ENCODE measurements at regions of chr11 and their contacts with region 1.

Region 1: DNA sequence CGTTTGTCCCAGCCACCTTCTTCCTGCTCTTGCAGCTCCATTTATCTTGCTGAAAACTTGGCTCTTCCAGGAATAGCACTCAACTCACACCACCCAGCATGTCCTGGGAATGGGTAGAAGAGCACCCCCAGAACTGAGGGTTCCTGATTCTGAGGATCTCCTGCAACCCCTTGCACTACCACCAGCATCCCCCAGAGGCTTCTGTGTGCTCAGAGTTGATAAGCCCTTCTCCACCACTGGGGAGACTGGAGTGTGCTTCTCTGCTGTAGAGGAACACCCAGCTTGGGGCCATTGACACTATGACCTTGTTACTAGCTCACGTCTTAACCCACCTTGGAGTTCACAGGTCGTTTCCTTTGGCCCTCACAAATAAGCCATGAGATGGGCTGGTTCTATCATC is 121.0 kb downstream of the GRIK4 start:
- DNase-seq: no peak
- H3K4me3 ChIP-seq: no peak overlapping the region
- H3K27ac ChIP-seq: no peak overlapping the region
- H3K4me1 ChIP-seq: peaks cover 0 to 8% (median 2%) of the 10 kb centered on the region in 4 experiments; a peak in 2 of 7 replicates
- H3K27me3 ChIP-seq: peaks cover 0 to 5% (median 2%) of the 10 kb centered on the region in 4 experiments; a peak in 5 of 7 replicates
- CTCF ChIP-seq: peak; percentile 45 to 88 (median 64)
- EP300 ChIP-seq: no peak
- POLR2A ChIP-seq: no peak
- RAD21 ChIP-seq: peak; percentile 23 to 54; a peak in 2 of 4 replicates

Region 2: DNA sequence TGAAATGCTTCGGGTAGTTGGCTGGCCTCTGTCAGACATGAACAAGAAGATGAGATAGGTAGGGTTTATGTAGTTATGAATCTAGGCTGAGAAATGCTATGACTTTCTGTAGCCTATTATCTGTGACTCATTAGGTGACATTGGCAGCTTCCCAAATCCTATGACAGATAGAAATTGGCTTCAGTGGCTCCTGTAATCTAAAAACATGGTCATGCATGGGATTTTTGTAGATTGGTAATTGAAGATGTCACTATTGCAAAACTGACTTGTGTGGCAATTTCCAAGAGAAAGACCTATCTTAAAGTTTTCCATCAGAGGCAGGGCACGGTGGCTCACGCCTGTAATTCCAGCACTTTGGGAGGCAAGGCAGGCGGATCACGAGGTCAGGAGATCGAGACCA is 150.4 kb before region 1 on chr11:
- CTCF ChIA-PET with region 1: no interaction called
- POLR2A ChIA-PET with region 1: no interaction called
- DNase-seq: no peak
- H3K4me3 ChIP-seq: no peak overlapping the region
- H3K27ac ChIP-seq: no peak overlapping the region
- H3K4me1 ChIP-seq: peaks cover 0 to 2% (median 0%) of the 10 kb centered on the region in 4 experiments; a peak in 1 of 7 replicates
- H3K27me3 ChIP-seq: no peaks in the 10 kb centered on the region
- CTCF ChIP-seq: no peak
- EP300 ChIP-seq: no peak
- POLR2A ChIP-seq: no peak
- RAD21 ChIP-seq: no peak

Region 3: GRCh38 chr11:120569861-120570260 is 62.7 kb before region 1 on chr11:
- CTCF ChIA-PET with region 1: interaction called, 10 read pairs
- POLR2A ChIA-PET with region 1: no interaction called
- DNase-seq: no peak
- H3K4me3 ChIP-seq: no peak overlapping the region; a peak in 1 of 8 replicates
- H3K27ac ChIP-seq: no peak overlapping the region
- H3K4me1 ChIP-seq: peaks cover 3 to 14% (median 6%) of the 10 kb centered on the region in 4 experiments
- H3K27me3 ChIP-seq: peaks cover 0 to 15% (median 8%) of the 10 kb centered on the region in 4 experiments; a peak in 5 of 7 replicates
- CTCF ChIP-seq: peak in 2 of 3 experiments; percentile 14 to 17; a peak in 2 of 4 replicates
- EP300 ChIP-seq: no peak
- POLR2A ChIP-seq: no peak
- RAD21 ChIP-seq: peak; percentile 9 to 29; a peak in 3 of 4 replicates

Region 4: DNA sequence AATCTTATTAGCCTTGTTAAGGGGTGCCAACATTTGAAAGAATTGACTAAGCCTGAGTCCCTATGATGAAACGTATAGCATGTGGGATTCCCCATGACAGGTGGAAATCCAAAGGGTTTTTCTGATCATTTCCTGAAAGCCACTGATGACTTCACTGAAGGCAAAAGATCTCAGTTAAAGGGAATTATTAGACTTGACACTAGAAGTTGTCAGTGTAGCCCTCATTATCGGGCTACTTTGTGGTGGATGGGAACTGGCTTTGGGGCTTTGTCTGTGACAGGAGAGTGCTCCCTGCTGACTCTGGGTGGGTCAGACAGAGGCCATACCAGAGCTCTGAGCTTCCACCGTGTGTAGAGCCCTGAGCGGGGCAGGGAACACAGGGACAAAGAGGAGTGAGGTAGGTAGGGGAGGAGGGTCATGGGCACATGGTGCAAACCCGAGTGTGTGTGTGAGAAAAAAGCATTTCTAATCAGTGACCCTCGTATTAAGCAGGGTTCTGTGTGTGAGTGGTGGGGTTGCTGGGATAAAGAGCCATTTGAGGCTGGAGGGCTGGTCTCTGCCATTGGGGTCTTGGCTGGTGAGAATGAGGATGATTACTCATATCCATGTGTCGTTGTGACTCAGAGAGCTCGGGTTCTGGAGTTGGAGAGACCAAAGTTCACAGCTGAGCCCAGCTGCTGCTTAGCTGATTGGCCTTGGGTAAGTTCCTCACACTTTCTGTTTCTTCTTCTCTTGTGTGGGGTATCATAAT is 19.9 kb before region 1 on chr11:
- CTCF ChIA-PET with region 1: interaction called, 155 read pairs
- POLR2A ChIA-PET with region 1: no interaction called
- DNase-seq: no peak
- H3K4me3 ChIP-seq: no peak overlapping the region
- H3K27ac ChIP-seq: no peak overlapping the region
- H3K4me1 ChIP-seq: peaks cover 0 to 14% (median 6%) of the 10 kb centered on the region in 4 experiments; a peak in 5 of 7 replicates
- H3K27me3 ChIP-seq: peaks cover 0 to under 1% (median 0%) of the 10 kb centered on the region in 4 experiments; a peak in 1 of 7 replicates
- CTCF ChIP-seq: no peak
- EP300 ChIP-seq: no peak
- POLR2A ChIP-seq: no peak
- RAD21 ChIP-seq: no peak

Region 5: DNA sequence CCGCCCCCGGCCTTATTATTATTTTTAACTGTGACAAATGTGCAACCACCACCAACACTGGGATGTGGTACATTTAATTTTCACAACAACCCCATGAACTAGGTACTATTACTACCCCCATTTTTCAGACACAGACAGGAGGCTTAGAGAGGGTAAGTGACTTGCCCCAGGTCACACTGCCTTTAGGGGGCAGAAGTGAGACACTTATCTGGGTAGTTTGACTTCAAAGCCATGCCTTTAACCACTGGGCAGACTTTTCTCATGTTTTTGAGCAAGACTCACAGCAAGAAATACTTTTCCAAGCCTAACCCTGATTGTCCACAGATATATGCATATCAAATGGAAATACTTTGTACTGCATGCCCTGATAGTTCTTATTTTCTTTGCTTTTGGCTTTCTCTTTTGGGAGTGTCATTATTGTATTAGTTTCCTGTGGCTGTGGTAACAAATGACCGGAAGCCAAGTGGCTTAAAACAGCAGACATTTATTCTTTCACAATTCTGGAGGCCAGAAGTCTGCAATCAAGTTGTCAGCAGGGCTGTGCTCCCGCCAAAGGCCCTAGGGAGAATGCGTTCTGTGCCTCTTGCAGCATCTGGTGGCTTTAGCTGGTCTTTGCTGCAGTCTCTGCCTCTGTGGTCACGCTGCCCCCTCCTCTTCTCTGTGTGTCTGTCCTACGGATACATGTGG is 10.2 kb before region 1 on chr11:
- CTCF ChIA-PET with region 1: interaction called, 155 read pairs
- POLR2A ChIA-PET with region 1: no interaction called
- DNase-seq: no peak
- H3K4me3 ChIP-seq: no peak overlapping the region
- H3K27ac ChIP-seq: no peak overlapping the region
- H3K4me1 ChIP-seq: no peaks in the 10 kb centered on the region; a peak in 1 of 7 replicates
- H3K27me3 ChIP-seq: no peaks in the 10 kb centered on the region
- CTCF ChIP-seq: peak; percentile 30 to 75 (median 47)
- EP300 ChIP-seq: no peak
- POLR2A ChIP-seq: no peak
- RAD21 ChIP-seq: peak; percentile 47 to 61; a peak in 3 of 4 replicates

Region 6: DNA sequence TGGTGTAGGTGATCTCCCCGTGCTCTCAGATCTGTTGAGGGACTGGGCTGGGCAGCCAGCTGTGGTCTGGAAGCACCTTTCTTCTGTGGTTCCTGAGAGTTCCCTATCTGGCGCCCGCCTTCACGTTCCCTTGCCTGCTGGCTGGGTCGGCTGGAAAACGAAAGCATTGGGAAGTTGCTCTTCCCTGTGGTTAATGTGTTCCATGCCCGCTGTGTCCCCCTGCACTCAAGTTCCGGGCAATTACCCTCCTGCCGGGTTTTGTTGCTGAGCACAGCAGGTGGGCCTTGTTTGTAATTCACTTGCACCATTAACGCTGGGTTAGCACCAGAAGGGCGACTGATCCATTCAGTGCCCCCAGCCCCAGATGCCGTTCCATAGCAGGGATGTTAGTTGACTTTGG is 13.1 kb after region 1 on chr11:
- CTCF ChIA-PET with region 1: interaction called, 111 read pairs
- POLR2A ChIA-PET with region 1: interaction called, 4 read pairs
- DNase-seq: peak; percentile 86 to 90
- H3K4me3 ChIP-seq: peak overlapping the region in 2 of 4 experiments; percentile 1 to 24; a peak in 1 of 8 replicates
- H3K27ac ChIP-seq: no peak overlapping the region
- H3K4me1 ChIP-seq: peaks cover 7 to 20% (median 11%) of the 10 kb centered on the region in 4 experiments
- H3K27me3 ChIP-seq: peaks cover 52 to 92% (median 82%) of the 10 kb centered on the region in 4 experiments
- CTCF ChIP-seq: no peak
- EP300 ChIP-seq: peak in 1 of 2 experiments; percentile 94; a peak in 2 of 3 replicates
- POLR2A ChIP-seq: no peak
- RAD21 ChIP-seq: peak in 1 of 2 experiments; percentile 26; a peak in 2 of 4 replicates

Region 7: DNA sequence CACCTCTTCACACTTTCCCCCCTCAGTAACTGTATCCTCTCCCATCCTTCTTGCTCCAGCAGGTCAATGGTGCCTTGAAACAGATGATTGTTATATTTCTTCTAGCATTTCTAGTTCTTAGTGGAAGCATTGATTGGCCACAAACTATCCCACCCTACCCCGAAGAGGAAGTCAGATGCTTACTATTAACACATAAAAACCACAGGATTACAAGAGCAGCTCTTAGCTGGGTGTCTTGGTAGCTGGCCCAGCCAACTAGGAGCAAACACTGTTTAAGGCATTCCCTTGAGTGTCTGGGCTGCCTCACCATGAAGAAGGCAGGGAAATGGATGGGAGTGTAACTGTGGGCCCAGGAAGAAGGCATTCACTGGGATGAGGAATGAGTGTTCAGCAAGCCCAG is 55.6 kb after region 1 on chr11:
- CTCF ChIA-PET with region 1: interaction called, 39 read pairs
- POLR2A ChIA-PET with region 1: no interaction called
- DNase-seq: no peak
- H3K4me3 ChIP-seq: no peak overlapping the region
- H3K27ac ChIP-seq: no peak overlapping the region
- H3K4me1 ChIP-seq: no peaks in the 10 kb centered on the region
- H3K27me3 ChIP-seq: no peaks in the 10 kb centered on the region
- CTCF ChIP-seq: no peak
- EP300 ChIP-seq: no peak
- POLR2A ChIP-seq: no peak
- RAD21 ChIP-seq: no peak